PC-9 (cell line): ENCODE measurements at regions of chr3 and their contacts with region 1.

Region 1: GRCh38 chr3:45123030-45123429 is 23.1 kb downstream of the CDCP1 start:
- DNase-seq: peak; percentile 22 to 94
- H3K4me3 ChIP-seq: peak overlapping the region; percentile 14; the same call in 1 of the 2 replicates
- H3K27ac ChIP-seq: peak overlapping the region; percentile 98
- H3K4me1 ChIP-seq: peaks cover 90% of the 10 kb centered on the region
- H3K27me3 ChIP-seq: no peaks in the 10 kb centered on the region
- CTCF ChIP-seq: no peak

Region 2: GRCh38 chr3:45043728-45044299 is 79.2 kb before region 1 on chr3:
- CTCF ChIA-PET with region 1: interaction called, 4 read pairs
- POLR2A ChIA-PET with region 1: no interaction called
- intact Hi-C with region 1: loop called (anchors 5 kb)
- DNase-seq: peak in 1 of 2 experiments; percentile 58
- H3K4me3 ChIP-seq: no peak overlapping the region
- H3K27ac ChIP-seq: peak overlapping the region; percentile 58; the same call in 1 of the 2 replicates
- H3K4me1 ChIP-seq: peaks cover 33% of the 10 kb centered on the region
- H3K27me3 ChIP-seq: no peaks in the 10 kb centered on the region
- CTCF ChIP-seq: no peak

Region 3: GRCh38 chr3:45055411-45056143 is 67.5 kb before region 1 on chr3:
- CTCF ChIA-PET with region 1: no interaction called
- POLR2A ChIA-PET with region 1: no interaction called
- intact Hi-C with region 1: no loop called
- DNase-seq: peak in 1 of 2 experiments; percentile 57
- H3K4me3 ChIP-seq: no peak overlapping the region
- H3K27ac ChIP-seq: peak overlapping the region; percentile 66
- H3K4me1 ChIP-seq: peaks cover 61% of the 10 kb centered on the region
- H3K27me3 ChIP-seq: no peaks in the 10 kb centered on the region
- CTCF ChIP-seq: 0 out of 2 replicates have a peak, but pooled peaks have one; percentile 33

Region 4: GRCh38 chr3:45137656-45138181 is 14.7 kb after region 1 on chr3:
- CTCF ChIA-PET with region 1: no interaction called
- POLR2A ChIA-PET with region 1: interaction called, 9 read pairs
- intact Hi-C with region 1: loop called (anchors 2 kb)
- DNase-seq: peak; percentile 31 to 72
- H3K4me3 ChIP-seq: no peak overlapping the region
- H3K27ac ChIP-seq: peak overlapping the region; percentile 76
- H3K4me1 ChIP-seq: peaks cover 80% of the 10 kb centered on the region
- H3K27me3 ChIP-seq: no peaks in the 10 kb centered on the region
- CTCF ChIP-seq: no peak

Region 5: DNA sequence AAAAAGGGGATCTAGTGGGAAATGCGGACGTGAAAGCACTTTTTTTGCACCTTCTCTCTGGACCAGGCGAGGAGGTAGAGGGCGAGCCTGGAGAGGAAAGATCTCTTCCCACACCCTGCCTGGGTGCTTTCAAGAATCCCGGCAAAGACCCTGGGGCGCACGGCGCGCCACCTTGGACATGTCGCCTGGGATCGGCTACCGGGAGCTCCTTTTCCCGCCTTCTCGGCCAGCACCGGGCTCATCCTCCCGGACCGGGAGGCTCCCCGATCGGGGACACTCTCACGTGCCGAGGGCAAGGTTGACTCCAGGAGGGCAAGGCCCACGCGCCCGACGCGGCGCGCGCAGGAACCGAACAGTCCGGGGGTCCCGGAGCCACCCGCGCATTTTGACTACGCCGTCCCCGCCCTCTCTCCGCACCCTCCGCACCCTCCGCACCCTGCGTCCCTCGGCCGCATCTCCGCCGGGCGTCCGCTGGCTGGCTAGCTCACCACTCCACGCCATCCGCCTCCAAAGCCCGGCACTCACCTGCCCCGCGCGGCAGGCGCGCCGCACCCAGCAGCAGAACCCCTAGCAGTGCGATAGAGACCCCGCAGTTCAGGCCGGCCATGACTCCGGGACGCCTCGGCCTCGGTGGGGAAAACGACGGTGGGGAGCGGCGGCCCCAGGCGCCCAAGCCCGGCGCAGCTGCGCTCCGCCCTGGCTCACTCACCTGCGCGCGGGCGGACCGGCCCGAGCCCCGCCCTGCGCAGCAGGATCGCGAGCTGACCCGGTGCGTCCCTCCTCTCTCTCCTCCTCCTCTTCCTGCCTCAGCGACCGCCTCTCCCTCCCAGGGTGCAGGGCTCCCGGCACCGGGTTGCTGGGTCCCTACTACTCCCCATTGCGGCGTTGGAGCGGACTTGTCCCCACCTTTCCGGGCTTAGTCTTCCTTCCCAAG is 22.9 kb after region 1 on chr3 and contains the start of gene CDCP1:
- CTCF ChIA-PET with region 1: no interaction called
- POLR2A ChIA-PET with region 1: interaction called, 15 read pairs
- intact Hi-C with region 1: no loop called
- DNase-seq: peak; percentile 43 to 78
- H3K4me3 ChIP-seq: peak within 1 kb of the TSS; percentile 83
- H3K27ac ChIP-seq: peak within 1 kb of the TSS; percentile 85
- H3K4me1 ChIP-seq: peaks cover 34% of the 10 kb centered on the region
- H3K27me3 ChIP-seq: no peaks in the 10 kb centered on the region
- CTCF ChIP-seq: no peak
- total RNA-seq, gene CDCP1: 75.7 and 85.0 TPM in 2 replicates

Region 6: GRCh38 chr3:45199837-45200648 is 77.0 kb after region 1 on chr3:
- CTCF ChIA-PET with region 1: interaction called, 3 read pairs
- POLR2A ChIA-PET with region 1: no interaction called
- intact Hi-C with region 1: loop called (anchors 2 kb)
- DNase-seq: peak; percentile 72 to 97
- H3K4me3 ChIP-seq: no peak overlapping the region
- H3K27ac ChIP-seq: peak overlapping the region; percentile 92
- H3K4me1 ChIP-seq: peaks cover 32% of the 10 kb centered on the region
- H3K27me3 ChIP-seq: no peaks in the 10 kb centered on the region
- CTCF ChIP-seq: no peak